ENCODE measurements at regions of chr17 and their contacts with region 1.

Region 1: DNA sequence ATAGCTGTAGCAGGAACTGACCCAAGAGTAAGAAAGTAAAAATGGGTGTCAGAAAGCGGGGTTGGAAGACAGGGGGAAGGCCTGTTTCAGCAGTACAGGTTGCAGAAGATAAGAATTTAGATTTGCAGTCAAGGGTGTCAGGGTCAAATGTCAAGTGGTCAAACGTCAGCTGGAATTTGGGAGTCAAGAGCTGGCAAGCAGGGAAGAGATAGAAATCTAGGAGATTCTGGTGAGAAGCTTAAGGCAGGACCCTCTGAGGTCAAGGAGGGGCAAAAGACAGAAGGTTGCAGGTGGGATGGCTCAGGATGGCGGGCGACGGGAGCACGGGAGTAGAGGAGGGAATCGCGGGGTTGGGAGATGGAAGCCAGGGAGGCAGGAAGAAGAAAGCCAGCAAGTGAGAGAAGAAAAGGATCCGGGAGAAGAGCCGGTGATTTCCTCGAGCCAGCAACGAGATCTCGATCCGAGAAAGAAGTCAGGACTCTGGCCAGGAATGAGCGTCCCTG is 335 bp downstream of the SLC25A35 start:
- DNase-seq: no peak
- ATAC-seq: peak; percentile 1 to 27 (median 6)
- H3K4me3 ChIP-seq: peak overlapping the region; percentile 10 to 87 (median 65)
- H3K27ac ChIP-seq: peak overlapping the region; percentile 81 to 99 (median 89)
- H3K4me1 ChIP-seq: peaks cover 8 to 27% (median 13%) of the 10 kb centered on the region in 9 donors
- H3K27me3 ChIP-seq: no peaks in the 10 kb centered on the region
- CTCF ChIP-seq: no peak

Region 2: GRCh38 chr17:8073627-8074484 is 221.0 kb before region 1 on chr17:
- intact Hi-C with region 1: loop called in 2 of 10 experiments (anchors 5 kb)
- DNase-seq: peak; percentile 43 to 77
- ATAC-seq: peak; percentile 40 to 81 (median 68)
- H3K4me3 ChIP-seq: peak overlapping the region in 4 of 10 donors; percentile 24 to 30 (median 26)
- H3K27ac ChIP-seq: no peak overlapping the region
- H3K4me1 ChIP-seq: peaks cover 0 to 31% (median 19%) of the 10 kb centered on the region in 9 donors
- H3K27me3 ChIP-seq: peaks cover 6 to 85% (median 81%) of the 10 kb centered on the region in 7 donors
- CTCF ChIP-seq: peak; percentile 62 to 98 (median 89)

Region 3: GRCh38 chr17:8326511-8327302 is 31.8 kb after region 1 on chr17:
- intact Hi-C with region 1: no loop called
- DNase-seq: peak; percentile 47 to 53
- ATAC-seq: peak; percentile 58 to 79 (median 76)
- H3K4me3 ChIP-seq: peak overlapping the region; percentile 37 to 75 (median 64)
- H3K27ac ChIP-seq: peak overlapping the region; percentile 2 to 88 (median 81)
- H3K4me1 ChIP-seq: peaks cover 0 to 35% (median 27%) of the 10 kb centered on the region in 9 donors
- H3K27me3 ChIP-seq: peaks cover 0 to 38% (median 0%) of the 10 kb centered on the region in 7 donors
- CTCF ChIP-seq: no peak

Region 4: GRCh38 chr17:9837551-9838471 is 1542.9 kb after region 1 on chr17:
- intact Hi-C with region 1: no loop called
- DNase-seq: peak; percentile 46 to 58
- ATAC-seq: peak; percentile 41 to 91 (median 73)
- H3K4me3 ChIP-seq: no peak overlapping the region
- H3K27ac ChIP-seq: peak overlapping the region in 1 of 10 donors; percentile 42
- H3K4me1 ChIP-seq: peaks cover 9 to 24% (median 13%) of the 10 kb centered on the region in 9 donors
- H3K27me3 ChIP-seq: peaks cover 0 to 20% (median 3%) of the 10 kb centered on the region in 7 donors
- CTCF ChIP-seq: no peak

Measured in heart right ventricle (tissue), 16 donors.